ENCODE measurements at regions of chr1 and their contacts with region 1.

Region 1: GRCh38 chr1:233172227-233172626 is 123.3 kb downstream of the PCNX2 start:
- DNase-seq: no peak
- ATAC-seq: peak in 3 of 4 donors; percentile 45 to 60 (median 56)
- H3K4me3 ChIP-seq: no peak overlapping the region
- H3K27ac ChIP-seq: no peak overlapping the region
- H3K4me1 ChIP-seq: no peaks in the 10 kb centered on the region
- H3K27me3 ChIP-seq: no peaks in the 10 kb centered on the region
- CTCF ChIP-seq: peak; percentile 24 to 64 (median 50)
- POLR2A ChIP-seq: no peak

Region 2: DNA sequence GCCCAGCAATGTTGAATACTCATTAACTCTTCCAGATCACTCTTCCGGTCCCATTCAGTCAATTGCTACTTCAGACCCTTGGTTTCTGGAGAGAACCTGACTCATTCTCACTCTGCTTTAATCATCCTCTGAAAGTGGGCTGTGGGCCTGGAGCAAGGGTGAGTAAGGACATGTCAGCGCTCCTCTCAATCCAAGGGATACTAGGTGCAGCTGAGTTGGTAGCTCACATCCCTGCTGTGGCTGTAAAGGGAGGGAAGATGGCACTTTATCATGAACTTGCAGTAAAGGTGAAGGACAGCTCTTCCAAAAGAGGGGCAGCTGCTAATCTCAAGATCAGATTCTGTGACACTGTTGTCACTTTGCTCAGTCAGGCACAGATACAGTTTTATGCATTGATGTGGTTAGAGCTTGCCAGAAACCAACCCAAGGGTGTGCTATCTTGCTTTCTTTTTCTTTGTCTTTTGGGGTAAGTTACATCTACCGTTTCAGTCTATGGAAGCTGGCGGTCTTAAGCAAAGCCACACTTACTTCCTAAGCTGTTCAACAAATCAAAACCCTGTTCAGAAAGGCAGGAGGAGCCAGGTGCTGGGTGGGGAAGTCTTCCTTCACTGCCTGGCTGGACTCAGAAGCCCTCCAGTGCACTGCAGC is 248.4 kb before region 1 on chr1:
- intact Hi-C with region 1: no loop called
- DNase-seq: no peak
- ATAC-seq: no peak
- H3K4me3 ChIP-seq: no peak overlapping the region
- H3K27ac ChIP-seq: peak overlapping the region in 1 of 12 donors; percentile 6
- H3K4me1 ChIP-seq: peaks cover 0 to 6% (median 0%) of the 10 kb centered on the region in 12 donors
- H3K27me3 ChIP-seq: no peaks in the 10 kb centered on the region
- CTCF ChIP-seq: no peak
- POLR2A ChIP-seq: no peak

Region 3: GRCh38 chr1:232950197-232951176 is 221.7 kb before region 1 on chr1 and contains the start of gene NTPCR:
- intact Hi-C with region 1: loop called in 1 of 10 experiments (anchors 10 kb)
- DNase-seq: peak; percentile 94 to 98 (median 95)
- ATAC-seq: peak; percentile 94 to 98 (median 96)
- H3K4me3 ChIP-seq: peak within 1 kb of the TSS; percentile 40 to 100 (median 88)
- H3K27ac ChIP-seq: peak within 1 kb of the TSS; percentile 70 to 95 (median 88)
- H3K4me1 ChIP-seq: peaks cover 0 to 32% (median 21%) of the 10 kb centered on the region in 12 donors
- H3K27me3 ChIP-seq: peaks cover 0 to 5% (median 0%) of the 10 kb centered on the region in 9 donors
- CTCF ChIP-seq: peak in 7 of 12 donors; percentile 5 to 42 (median 28)
- POLR2A ChIP-seq: peak in 1 of 2 donors; percentile 65
- total RNA-seq, gene NTPCR: 29.6 to 62.9 (median 57.7) TPM

Region 4: DNA sequence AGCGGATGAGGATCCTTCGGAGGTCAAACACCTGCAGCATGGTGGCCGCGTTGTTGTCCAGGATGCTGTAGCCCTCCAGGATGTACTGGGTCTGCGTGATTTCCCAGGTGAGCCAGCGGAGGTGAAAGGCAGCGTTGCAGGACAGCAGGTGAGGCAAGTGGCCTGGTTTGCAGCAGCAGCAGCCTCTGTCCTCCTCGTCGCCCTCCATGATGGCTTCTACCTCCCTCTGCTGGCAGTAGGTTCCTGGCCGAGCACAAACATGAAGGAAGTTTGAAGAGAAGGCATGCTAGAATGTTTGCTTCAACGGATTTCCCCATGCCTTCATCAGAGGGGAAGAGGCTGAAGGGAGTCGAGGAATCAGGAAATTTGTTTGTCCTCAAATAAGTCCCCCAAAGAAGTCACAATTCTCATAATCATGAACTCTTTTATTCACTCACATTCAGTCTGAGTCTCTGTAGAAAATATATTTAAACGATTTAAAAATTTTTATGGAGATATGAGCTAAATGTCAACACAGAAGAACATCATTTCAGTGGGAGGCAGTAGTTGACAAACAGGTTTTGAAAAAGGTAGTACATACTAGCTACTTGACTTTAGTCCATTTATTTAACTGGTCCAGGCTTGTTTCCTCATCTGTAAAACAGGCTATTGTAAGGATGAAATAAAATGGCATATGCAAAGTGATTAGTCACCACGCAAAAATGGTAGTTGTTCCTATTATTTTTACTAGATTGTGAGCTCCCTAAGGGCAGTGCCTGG is 146.9 kb before region 1 on chr1:
- intact Hi-C with region 1: loop called in 5 of 10 experiments (anchors 2 to 10 kb)
- DNase-seq: peak in 4 of 5 donors; percentile 40 to 61 (median 44)
- ATAC-seq: peak in 3 of 4 donors; percentile 59 to 70 (median 69)
- H3K4me3 ChIP-seq: no peak overlapping the region
- H3K27ac ChIP-seq: no peak overlapping the region
- H3K4me1 ChIP-seq: peaks cover 0 to 14% (median 3%) of the 10 kb centered on the region in 12 donors
- H3K27me3 ChIP-seq: no peaks in the 10 kb centered on the region
- CTCF ChIP-seq: peak; percentile 29 to 74 (median 56)
- POLR2A ChIP-seq: no peak

Region 5: DNA sequence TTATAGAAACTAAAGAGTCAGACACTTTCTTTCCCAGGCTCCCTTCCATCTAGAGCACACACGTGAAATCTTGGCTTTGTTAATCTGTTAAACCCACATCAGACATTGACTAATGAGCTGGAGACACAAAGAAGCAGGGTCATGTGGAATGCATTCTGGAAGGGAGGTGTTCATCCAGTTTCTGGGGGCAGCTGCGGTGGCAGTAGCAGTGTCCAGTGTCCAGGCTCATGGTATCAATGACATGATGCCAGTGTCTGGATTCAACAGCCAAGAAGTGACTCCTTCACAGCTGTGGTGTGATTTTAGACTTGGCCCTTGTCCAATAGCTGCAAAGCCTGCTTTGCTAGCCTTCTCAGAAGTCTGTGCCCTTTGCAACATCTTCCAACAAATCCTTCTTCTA is 126.6 kb before region 1 on chr1:
- intact Hi-C with region 1: no loop called
- DNase-seq: no peak
- ATAC-seq: no peak
- H3K4me3 ChIP-seq: no peak overlapping the region
- H3K27ac ChIP-seq: no peak overlapping the region
- H3K4me1 ChIP-seq: no peaks in the 10 kb centered on the region
- H3K27me3 ChIP-seq: no peaks in the 10 kb centered on the region
- CTCF ChIP-seq: no peak
- POLR2A ChIP-seq: no peak

Region 6: GRCh38 chr1:233496993-233497392 is 324.8 kb after region 1 on chr1:
- intact Hi-C with region 1: no loop called
- DNase-seq: no peak
- ATAC-seq: no peak
- H3K4me3 ChIP-seq: no peak overlapping the region
- H3K27ac ChIP-seq: no peak overlapping the region
- H3K4me1 ChIP-seq: no peaks in the 10 kb centered on the region
- H3K27me3 ChIP-seq: peaks cover 0 to 7% (median 0%) of the 10 kb centered on the region in 9 donors
- CTCF ChIP-seq: no peak
- POLR2A ChIP-seq: no peak